Activated CD4-positive, alpha-beta T cell treated with anti-CD3 and anti-CD28 coated beads, Interleukin-2, amount 10 ng/mL, durations not matched to agents 24 days and 14 days (primary cell): ENCODE measurements at regions of chr17 and their contacts with region 1.

Region 1: DNA sequence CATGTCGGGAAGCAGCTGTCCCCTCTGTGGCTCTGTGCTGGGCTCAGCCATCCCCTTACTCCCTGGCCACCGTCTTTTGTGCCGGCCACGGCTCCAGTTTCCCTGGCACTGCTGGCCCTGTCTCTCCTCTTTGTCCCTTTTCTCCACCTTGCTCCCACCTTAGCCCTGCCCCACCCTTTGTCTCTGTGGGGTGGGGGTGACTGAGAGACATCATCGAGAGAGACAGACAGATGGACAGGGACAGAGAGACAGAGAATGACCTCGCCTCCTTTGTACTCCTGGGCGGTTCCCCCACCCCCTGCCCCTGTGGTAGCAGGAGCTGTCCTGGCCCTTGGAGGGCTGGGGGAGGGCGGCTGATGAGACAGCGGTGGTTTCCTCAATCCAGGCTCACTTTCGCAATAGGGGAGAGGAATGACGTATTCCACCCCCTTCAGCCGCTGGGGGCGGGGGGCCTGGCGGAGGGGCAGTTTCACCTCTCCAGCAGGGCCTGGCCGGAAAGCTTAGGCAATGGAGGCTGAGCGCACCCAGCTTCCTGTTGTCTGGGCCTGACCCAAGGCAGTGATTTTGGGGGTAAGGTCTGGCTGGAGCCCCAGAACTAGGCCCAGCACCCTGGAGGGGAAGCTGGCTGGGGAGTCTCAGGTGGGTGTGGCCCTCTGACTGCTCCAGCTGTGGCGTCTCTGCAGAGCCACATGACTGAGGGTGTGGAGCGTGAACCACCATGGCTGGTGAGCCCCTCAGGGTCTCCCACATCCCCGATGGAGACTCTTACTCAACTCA is 7.3 kb downstream of the FMNL1 start:
- DNase-seq: peak; percentile 94
- H3K4me3 Mint-ChIP-seq: peak overlapping the region; percentile 99
- H3K27ac Mint-ChIP-seq: peak overlapping the region; percentile 94
- H3K4me1 Mint-ChIP-seq: peaks cover 81% of the 10 kb centered on the region
- H3K27me3 Mint-ChIP-seq: no peaks in the 10 kb centered on the region

Region 2: DNA sequence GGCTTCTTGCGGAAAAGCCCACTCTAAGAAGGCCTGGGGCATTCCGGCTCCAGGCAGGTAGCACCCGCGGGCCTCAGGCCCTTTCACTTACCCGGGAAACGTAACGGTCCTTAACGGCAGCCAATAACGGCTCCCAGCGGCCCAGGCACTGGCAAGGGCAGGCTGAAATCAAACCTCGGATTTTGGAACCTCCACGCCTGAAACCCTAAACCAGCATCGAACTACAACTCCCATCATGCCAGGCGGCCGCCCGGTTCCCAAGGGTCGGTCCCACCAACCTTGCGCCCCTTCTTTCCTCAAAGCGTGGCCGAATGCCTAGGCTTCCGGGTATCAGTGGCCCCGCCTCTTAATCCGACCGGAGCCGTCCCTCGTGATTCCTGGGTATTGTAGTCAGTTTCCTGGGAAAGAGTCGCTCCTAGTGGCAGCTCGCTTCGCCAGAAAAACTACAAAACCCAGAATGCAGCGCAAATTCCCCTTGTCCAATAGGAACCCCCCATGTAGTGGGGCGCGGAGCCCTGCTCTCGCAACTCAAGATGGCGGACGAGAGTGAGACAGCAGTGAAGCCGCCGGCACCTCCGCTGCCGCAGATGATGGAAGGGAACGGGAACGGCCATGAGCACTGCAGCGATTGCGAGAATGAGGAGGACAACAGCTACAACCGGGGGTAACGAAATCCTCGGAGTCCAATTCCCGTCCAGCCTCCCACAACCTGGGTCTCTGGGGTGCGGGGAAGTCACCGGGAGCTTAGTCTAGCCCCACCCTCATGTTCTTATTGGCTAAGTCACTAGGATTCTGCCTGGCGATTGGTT is 167.9 kb before region 1 on chr17 and contains the start of gene NMT1:
- intact Hi-C with region 1: loop called (anchors 5 kb)
- DNase-seq: peak; percentile 99
- H3K4me3 Mint-ChIP-seq: peak within 1 kb of the TSS; percentile 91
- H3K27ac Mint-ChIP-seq: peak within 1 kb of the TSS; percentile 100
- H3K4me1 Mint-ChIP-seq: peaks cover 29% of the 10 kb centered on the region
- H3K27me3 Mint-ChIP-seq: no peaks in the 10 kb centered on the region
- total RNA-seq, gene NMT1: 176 and 182 TPM in 2 replicates

Region 3: DNA sequence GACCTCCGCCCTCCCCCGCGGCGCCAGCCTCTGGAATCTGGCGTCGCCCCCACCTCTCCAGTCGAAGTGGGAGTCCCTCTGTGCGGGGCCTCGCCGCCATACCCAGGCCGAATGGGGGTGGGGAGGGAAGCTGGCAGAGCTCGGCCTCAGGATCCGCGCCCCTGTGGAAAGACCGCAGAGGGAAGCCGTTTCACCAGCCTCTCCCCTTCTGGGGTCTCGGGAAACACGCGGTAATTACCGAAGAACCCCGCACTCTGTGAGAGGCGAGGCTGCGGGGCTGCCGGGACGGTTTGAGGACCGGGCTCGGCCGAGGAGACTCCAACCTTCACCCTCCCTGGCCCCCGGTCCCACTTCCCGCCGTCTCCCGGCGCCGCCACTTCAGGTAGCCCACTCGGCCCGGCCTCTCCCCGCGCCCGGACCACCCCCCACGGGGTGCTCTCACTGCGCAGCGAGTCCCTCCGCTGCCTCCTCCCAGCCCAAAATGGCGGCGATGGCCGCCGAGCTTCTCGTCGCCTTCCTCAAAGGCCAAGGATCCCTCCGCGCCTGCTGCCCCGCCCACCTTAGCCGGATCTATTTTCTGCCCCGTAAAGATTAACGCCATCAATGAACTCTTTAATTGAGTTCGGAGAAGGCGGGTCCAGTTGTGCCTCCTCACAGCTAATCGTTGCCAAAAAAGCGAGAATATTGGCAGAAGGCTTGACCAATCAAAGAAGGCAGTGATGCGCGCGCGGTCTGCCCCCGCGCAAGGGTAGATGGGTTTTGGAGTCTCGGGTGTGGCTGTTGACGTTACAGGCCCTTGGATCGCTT is 67.7 kb before region 1 on chr17:
- intact Hi-C with region 1: loop called (anchors 2 kb)
- DNase-seq: peak; percentile 100
- H3K4me3 Mint-ChIP-seq: peak overlapping the region; percentile 99
- H3K27ac Mint-ChIP-seq: peak overlapping the region; percentile 98
- H3K4me1 Mint-ChIP-seq: peaks cover 38% of the 10 kb centered on the region
- H3K27me3 Mint-ChIP-seq: no peaks in the 10 kb centered on the region

Region 4: GRCh38 chr17:45247429-45248131 is 18.6 kb after region 1 on chr17:
- intact Hi-C with region 1: loop called (anchors 1 kb)
- DNase-seq: peak; percentile 98
- H3K4me3 Mint-ChIP-seq: peak overlapping the region; percentile 89
- H3K27ac Mint-ChIP-seq: peak overlapping the region; percentile 94
- H3K4me1 Mint-ChIP-seq: peaks cover 49% of the 10 kb centered on the region
- H3K27me3 Mint-ChIP-seq: no peaks in the 10 kb centered on the region

Region 5: GRCh38 chr17:45307290-45308015 is 78.5 kb after region 1 on chr17:
- intact Hi-C with region 1: loop called (anchors 1 kb)
- DNase-seq: peak; percentile 88
- H3K4me3 Mint-ChIP-seq: peak overlapping the region; percentile 69
- H3K27ac Mint-ChIP-seq: peak overlapping the region; percentile 96
- H3K4me1 Mint-ChIP-seq: peaks cover 74% of the 10 kb centered on the region
- H3K27me3 Mint-ChIP-seq: no peaks in the 10 kb centered on the region

Region 6: DNA sequence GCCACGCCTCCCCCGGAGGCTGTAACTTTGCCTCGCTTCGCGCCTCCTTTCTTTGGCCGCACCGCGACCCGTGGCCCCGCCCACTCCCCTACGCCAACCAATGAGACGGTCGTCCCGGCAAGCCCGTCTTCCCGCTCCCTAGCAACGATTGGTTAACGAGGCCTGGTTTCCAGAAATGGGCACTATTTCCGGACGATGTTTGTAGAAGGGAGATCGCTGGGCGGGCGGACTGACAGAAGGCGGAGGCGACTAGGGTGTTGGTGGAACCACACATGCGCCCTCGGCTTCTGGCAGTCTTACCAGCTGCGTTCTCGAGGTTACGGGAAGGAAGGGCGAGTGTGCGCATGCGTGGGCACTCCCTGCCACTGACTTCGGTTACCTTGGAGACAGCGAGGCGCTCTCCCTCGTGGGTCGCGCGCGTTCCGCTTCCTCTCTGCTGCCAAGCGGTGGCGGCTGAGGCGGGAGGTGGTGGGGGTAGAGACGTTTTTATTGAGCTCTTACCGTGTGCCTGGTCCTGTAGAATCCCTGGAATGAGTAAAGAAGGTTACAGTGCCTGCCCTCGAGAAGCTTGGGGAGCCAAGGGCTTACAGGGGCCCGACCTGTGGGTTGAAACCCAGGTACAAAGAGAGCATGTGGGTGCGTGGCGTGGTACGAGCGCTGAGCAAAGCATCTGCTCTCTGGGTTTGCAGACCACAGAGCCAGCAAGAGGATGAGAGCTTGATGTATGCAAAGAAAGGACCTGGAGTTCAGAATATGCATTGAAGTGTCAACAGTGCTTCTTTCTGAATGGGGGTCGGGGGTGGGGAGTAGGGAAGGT is 88.4 kb after region 1 on chr17:
- intact Hi-C with region 1: loop called (anchors 1 kb)
- DNase-seq: peak; percentile 100
- H3K4me3 Mint-ChIP-seq: peak overlapping the region; percentile 90
- H3K27ac Mint-ChIP-seq: peak overlapping the region; percentile 96
- H3K4me1 Mint-ChIP-seq: peaks cover 67% of the 10 kb centered on the region
- H3K27me3 Mint-ChIP-seq: peaks cover 3% of the 10 kb centered on the region